ENCODE measurements at regions of chr4 and their contacts with region 1.

Region 1: GRCh38 chr4:169024762-169025161 is 14.7 kb upstream of the CBR4 start:
- DNase-seq: peak in 1 of 2 donors; percentile 36
- ATAC-seq: peak; percentile 59 to 74 (median 67)
- H3K4me3 ChIP-seq: no peak overlapping the region
- H3K4me3 Mint-ChIP-seq: no peak overlapping the region
- H3K27ac ChIP-seq: no peak overlapping the region
- H3K27ac Mint-ChIP-seq: no peak overlapping the region
- H3K4me1 ChIP-seq: no peaks in the 10 kb centered on the region
- H3K4me1 Mint-ChIP-seq: peaks cover 5% of the 10 kb centered on the region in 2 donors
- H3K27me3 ChIP-seq: no peaks in the 10 kb centered on the region
- H3K27me3 Mint-ChIP-seq: no peaks in the 10 kb centered on the region
- CTCF ChIP-seq: peak; percentile 22

Region 2: DNA sequence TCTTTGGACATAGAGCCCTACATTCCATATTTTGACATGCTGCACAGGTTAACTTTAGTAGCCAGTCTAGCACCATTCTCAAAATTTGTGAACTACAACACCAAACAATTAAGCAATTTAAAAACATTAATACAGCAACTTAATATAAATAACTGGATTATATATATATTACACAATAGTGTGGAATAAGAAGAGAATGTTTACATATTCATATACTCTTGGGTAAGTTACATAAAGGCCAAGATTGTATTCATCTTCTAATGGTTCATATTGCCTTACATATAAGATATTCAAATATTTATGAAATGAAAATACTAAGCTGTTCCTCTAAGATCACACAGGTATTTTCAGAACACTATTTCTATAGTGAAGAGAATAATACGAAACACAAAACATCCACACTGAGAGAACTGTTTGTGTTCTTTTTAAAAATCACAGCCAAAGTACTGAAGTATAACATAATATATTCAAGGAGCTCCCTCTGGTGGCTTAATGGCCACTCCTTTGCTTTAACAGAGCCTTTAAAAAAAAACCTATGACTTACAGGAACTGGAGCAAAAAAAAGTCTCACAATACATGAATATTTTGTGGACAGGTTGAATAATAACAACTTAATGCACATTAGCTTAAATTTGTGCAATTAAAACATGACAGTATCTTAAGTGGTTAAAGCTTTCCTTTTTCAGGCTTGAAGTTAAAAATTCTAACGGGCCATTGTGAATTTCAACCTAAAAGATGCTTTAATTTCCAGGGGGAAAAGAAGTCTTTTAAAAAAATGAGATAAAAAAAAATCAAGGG is 541.5 kb after region 1 on chr4:
- intact Hi-C with region 1: loop called (anchors 5 kb)
- DNase-seq: peak in 1 of 2 donors; percentile 66
- ATAC-seq: peak; percentile 64 to 78 (median 76)
- H3K4me3 ChIP-seq: no peak overlapping the region
- H3K4me3 Mint-ChIP-seq: peak overlapping the region; percentile 13
- H3K27ac ChIP-seq: no peak overlapping the region
- H3K27ac Mint-ChIP-seq: no peak overlapping the region
- H3K4me1 ChIP-seq: no peaks in the 10 kb centered on the region
- H3K4me1 Mint-ChIP-seq: peaks cover 4 to 17% of the 10 kb centered on the region in 2 donors
- H3K27me3 ChIP-seq: no peaks in the 10 kb centered on the region
- H3K27me3 Mint-ChIP-seq: no peaks in the 10 kb centered on the region
- CTCF ChIP-seq: peak; percentile 66

Measured in natural killer cell (primary cell).